Dorsolateral prefrontal cortex (tissue), 120 donors: ENCODE measurements at regions of chr4 and their contacts with region 1.

Region 1: GRCh38 chr4:161629694-161630441 is 533.9 kb downstream of the FSTL5 start:
- DNase-seq: no peak
- H3K4me3 ChIP-seq: no peak overlapping the region
- H3K27ac ChIP-seq: no peak overlapping the region
- H3K27me3 ChIP-seq: no peaks in the 10 kb centered on the region
- CTCF ChIP-seq: no peak

Region 2: GRCh38 chr4:161581262-161582230 is 48.3 kb before region 1 on chr4:
- intact Hi-C with region 1: loop called in 1 of 2 experiments (anchors 5 kb)
- DNase-seq: no peak
- H3K4me3 ChIP-seq: peak overlapping the region in 1 of 59 donors; percentile 5
- H3K27ac ChIP-seq: peak overlapping the region in 1 of 59 donors; percentile 10
- H3K27me3 ChIP-seq: no peaks in the 10 kb centered on the region
- CTCF ChIP-seq: no peak